ENCODE measurements at regions of chr2 and their contacts with region 1.

Region 1: DNA sequence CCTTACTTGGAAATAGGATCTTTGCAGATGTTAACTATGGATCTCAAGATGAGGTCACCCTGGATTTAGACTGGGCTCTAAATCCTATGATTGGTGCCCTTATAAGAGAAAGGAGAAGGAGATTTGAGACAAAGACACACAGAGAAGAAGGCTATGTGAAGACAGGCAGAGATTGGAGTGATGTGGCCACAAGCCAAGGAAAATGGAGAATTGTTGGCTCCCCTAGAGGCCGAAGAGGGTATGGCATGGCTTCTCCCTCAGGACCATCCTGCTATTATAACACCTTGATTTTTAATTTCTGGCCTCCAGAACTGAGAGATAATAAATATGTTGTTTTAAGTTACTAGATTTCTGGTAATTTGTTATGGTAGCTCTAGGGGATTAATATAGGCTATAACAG is 7.6 kb downstream of the CYBRD1 start:
- DNase-seq: peak in 1 of 2 experiments; percentile 62
- H3K4me3 ChIP-seq: no peak overlapping the region
- H3K27ac ChIP-seq: no peak overlapping the region
- H3K4me1 ChIP-seq: no peaks in the 10 kb centered on the region
- H3K27me3 ChIP-seq: no peaks in the 10 kb centered on the region
- CTCF ChIP-seq: peak; percentile 36 to 82 (median 67)
- EP300 ChIP-seq: no peak
- POLR2A ChIP-seq: no peak
- RAD21 ChIP-seq: peak; percentile 25 to 33; a peak in 3 of 4 replicates

Region 2: GRCh38 chr2:171541202-171541887 is 11.4 kb after region 1 on chr2:
- CTCF ChIA-PET with region 1: interaction called, 32 read pairs
- POLR2A ChIA-PET with region 1: interaction called, 3 read pairs
- DNase-seq: peak in 1 of 2 experiments; percentile 73
- H3K4me3 ChIP-seq: no peak overlapping the region
- H3K27ac ChIP-seq: no peak overlapping the region
- H3K4me1 ChIP-seq: no peaks in the 10 kb centered on the region
- H3K27me3 ChIP-seq: no peaks in the 10 kb centered on the region
- CTCF ChIP-seq: peak; percentile 68 to 79 (median 74)
- EP300 ChIP-seq: no peak
- POLR2A ChIP-seq: no peak
- RAD21 ChIP-seq: peak; percentile 34 to 39; a peak in 2 of 4 replicates

Region 3: GRCh38 chr2:171836146-171836910 is 306.4 kb after region 1 on chr2:
- CTCF ChIA-PET with region 1: no interaction called
- POLR2A ChIA-PET with region 1: no interaction called
- DNase-seq: no peak
- H3K4me3 ChIP-seq: no peak overlapping the region
- H3K27ac ChIP-seq: no peak overlapping the region
- H3K4me1 ChIP-seq: no peaks in the 10 kb centered on the region
- H3K27me3 ChIP-seq: no peaks in the 10 kb centered on the region
- CTCF ChIP-seq: no peak
- EP300 ChIP-seq: no peak
- POLR2A ChIP-seq: no peak
- RAD21 ChIP-seq: no peak